Common myeloid progenitor, CD34-positive (primary cell): ENCODE measurements at regions of chr4 and their contacts with region 1.

Region 1: DNA sequence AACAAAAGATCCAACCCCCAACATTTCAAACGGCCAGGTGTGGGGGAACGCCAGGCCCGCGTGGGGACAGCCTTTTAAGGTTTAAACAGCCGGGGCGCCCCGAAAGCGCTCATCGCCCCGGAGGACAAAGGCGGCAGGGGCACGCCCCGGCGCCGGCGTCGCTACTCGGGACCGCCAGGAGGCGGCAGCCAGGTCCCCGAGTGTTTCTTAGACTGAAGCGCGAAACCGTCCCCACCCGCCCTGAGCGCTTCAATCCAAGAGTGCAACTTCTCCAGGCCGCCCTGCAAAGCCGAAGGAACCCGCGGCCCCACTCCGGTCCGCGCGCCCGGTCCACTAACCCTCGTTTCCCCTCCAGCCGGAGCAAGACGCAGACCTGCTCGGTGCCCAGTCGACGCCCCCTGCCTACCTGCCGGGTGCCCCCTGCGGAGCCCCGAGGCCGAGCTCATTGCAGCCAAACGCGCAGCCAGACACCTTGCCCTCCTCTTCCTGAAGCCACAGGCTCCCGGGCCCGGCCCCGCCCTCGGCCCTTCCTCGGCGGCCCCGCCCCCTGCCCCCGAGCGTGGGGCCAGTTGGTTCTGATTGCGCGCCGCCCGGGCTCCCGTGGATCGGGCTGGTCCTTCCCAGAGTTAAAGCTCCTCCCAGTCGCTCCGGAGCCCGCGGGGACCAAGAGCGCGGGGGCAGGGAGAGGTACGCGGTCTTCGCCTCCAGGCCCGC is at the start of gene CASP6:
- DNase-seq: peak; percentile 87 to 94 (median 92)
- H3K4me3 ChIP-seq: peak within 1 kb of the TSS; percentile 78 to 97 (median 88)
- H3K27ac ChIP-seq: peak within 1 kb of the TSS; percentile 74 to 92
- H3K4me1 ChIP-seq: peaks cover 6 to 45% (median 32%) of the 10 kb centered on the region in 4 experiments
- H3K27me3 ChIP-seq: no peaks in the 10 kb centered on the region

Region 2: DNA sequence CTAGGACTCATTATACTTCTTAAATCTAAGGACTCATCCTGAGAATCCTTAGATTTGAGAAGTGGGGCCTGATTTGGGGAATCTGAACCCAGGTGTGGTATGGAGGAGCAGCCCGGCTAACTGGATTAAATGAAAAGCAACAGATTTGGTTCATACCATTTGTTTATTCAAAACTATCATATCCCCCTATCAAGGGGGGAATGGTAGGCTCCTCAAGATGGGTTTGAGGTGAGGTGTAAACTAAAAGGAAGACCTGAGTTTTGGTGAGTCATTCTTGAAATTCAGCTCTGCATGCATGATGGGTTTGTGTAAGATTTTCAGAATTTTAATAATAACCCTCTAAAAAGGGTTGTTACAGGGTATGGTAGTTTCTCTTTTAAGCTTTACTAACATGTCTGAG is 53.2 kb before region 1 on chr4:
- CTCF ChIA-PET with region 1: no interaction called
- POLR2A ChIA-PET with region 1: no interaction called
- DNase-seq: peak in 2 of 3 donors; percentile 16 to 21
- H3K4me3 ChIP-seq: no peak overlapping the region
- H3K27ac ChIP-seq: no peak overlapping the region
- H3K4me1 ChIP-seq: no peaks in the 10 kb centered on the region
- H3K27me3 ChIP-seq: no peaks in the 10 kb centered on the region

Region 3: DNA sequence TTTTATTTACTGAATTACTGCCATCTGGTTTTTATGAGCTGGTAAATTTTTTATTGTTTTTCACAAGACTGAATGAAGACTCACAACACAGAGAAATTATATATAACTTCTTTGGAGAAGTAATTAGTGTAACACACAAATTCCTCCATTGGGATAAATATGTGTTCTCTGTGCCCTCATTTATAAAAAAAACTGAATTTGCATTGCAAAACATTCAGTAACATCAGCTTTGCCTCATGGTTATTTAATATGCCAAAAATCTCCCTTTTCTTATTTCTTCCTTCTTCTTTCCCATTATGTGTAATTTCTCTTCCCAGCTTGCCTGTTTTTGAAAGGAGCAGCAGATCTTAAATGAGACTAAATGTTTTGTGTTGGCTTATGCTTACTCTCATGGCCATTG is 18.4 kb before region 1 on chr4:
- CTCF ChIA-PET with region 1: interaction called, 23 read pairs
- POLR2A ChIA-PET with region 1: interaction called, 4 read pairs
- DNase-seq: no peak
- H3K4me3 ChIP-seq: no peak overlapping the region
- H3K27ac ChIP-seq: no peak overlapping the region
- H3K4me1 ChIP-seq: peaks cover 0 to 4% (median 2%) of the 10 kb centered on the region in 4 experiments
- H3K27me3 ChIP-seq: no peaks in the 10 kb centered on the region

Region 4: GRCh38 chr4:109690690-109691410 is 12.3 kb before region 1 on chr4:
- CTCF ChIA-PET with region 1: interaction called, 23 read pairs
- POLR2A ChIA-PET with region 1: interaction called, 4 read pairs
- DNase-seq: peak in 1 of 3 donors; percentile 6
- H3K4me3 ChIP-seq: no peak overlapping the region
- H3K27ac ChIP-seq: peak overlapping the region in 1 of 2 experiments; percentile 20
- H3K4me1 ChIP-seq: peaks cover 0 to 11% (median 0%) of the 10 kb centered on the region in 4 experiments
- H3K27me3 ChIP-seq: no peaks in the 10 kb centered on the region

Region 5: DNA sequence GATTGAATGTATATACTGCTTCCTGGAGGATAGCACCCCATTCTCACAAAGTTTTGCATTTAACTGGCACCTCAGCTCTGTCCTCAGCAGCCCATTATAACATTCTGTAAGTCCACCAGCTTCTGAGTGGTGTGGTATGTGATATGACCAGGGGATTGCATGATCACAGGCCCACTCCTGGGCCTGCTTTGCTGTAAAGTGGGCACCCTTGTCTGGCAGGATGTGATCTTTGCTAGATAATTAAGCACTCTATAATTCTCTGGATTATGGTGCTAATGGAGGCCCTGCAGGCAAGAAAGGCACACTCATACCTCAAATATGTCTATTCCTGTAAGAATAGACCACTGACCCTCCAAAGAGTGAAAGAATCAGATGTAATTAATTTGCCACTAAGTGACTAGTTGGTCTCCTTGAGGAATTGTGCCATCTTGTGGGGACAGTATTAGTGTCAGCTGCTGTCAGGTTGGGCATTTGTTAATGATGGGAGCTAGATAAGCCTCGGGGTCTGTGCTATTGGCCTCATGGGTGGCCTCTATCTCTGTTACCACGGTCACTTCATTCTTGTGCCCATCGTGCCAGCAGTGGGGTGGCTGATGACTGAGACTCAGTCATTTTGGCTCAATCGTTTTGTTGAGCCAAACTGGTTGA is 100.9 kb after region 1 on chr4:
- CTCF ChIA-PET with region 1: interaction called, 14 read pairs
- POLR2A ChIA-PET with region 1: interaction called, 3 read pairs
- DNase-seq: peak; percentile 53 to 69 (median 69)
- H3K4me3 ChIP-seq: no peak overlapping the region
- H3K27ac ChIP-seq: no peak overlapping the region
- H3K4me1 ChIP-seq: peaks cover 0 to 18% (median 5%) of the 10 kb centered on the region in 4 experiments
- H3K27me3 ChIP-seq: no peaks in the 10 kb centered on the region

Region 6: DNA sequence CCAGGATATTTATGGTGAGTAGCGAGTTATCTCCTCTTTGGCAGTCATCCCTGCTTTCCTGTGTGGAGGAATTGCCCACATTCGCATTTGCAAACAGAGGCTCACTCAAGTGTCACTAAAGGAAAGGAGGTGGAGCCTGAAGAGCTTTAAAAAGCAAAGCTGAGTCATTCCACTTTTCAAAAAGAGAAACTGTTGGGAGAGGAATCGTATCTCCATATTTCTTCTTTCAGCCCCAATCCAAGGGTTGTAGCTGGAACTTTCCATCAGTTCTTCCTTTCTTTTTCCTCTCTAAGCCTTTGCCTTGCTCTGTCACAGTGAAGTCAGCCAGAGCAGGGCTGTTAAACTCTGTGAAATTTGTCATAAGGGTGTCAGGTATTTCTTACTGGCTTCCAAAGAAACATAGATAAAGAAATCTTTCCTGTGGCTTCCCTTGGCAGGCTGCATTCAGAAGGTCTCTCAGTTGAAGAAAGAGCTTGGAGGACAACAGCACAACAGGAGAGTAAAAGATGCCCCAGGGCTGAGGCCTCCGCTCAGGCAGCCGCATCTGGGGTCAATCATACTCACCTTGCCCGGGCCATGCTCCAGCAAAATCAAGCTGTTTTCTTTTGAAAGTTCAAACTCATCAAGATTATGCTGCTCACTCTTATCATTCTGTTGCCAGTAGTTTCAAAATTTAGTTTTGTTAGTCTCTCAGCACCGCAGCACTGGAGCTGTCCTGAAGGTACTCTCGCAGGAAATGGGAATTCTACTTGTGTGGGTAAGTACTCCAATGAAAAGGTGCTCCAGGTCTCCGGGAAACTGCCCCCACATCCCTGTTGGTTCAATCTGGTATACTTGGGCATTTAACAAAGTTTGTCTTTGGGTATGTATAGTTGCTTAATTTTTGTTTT is 209.8 kb after region 1 on chr4 and contains the start of gene EGF:
- CTCF ChIA-PET with region 1: no interaction called
- POLR2A ChIA-PET with region 1: no interaction called
- DNase-seq: peak in 2 of 3 donors; percentile 47 to 59
- H3K4me3 ChIP-seq: peak within 1 kb of the TSS in 6 of 7 experiments; percentile 8 to 69 (median 46)
- H3K27ac ChIP-seq: peak within 1 kb of the TSS in 1 of 2 experiments; percentile 43
- H3K4me1 ChIP-seq: peaks cover 7 to 17% (median 16%) of the 10 kb centered on the region in 4 experiments
- H3K27me3 ChIP-seq: no peaks in the 10 kb centered on the region

Region 7: GRCh38 chr4:109977854-109978501 is 274.9 kb after region 1 on chr4:
- CTCF ChIA-PET with region 1: interaction called, 12 read pairs
- POLR2A ChIA-PET with region 1: no interaction called
- DNase-seq: peak; percentile 40 to 63 (median 57)
- H3K4me3 ChIP-seq: no peak overlapping the region
- H3K27ac ChIP-seq: no peak overlapping the region
- H3K4me1 ChIP-seq: peaks cover 0 to 17% (median 6%) of the 10 kb centered on the region in 4 experiments
- H3K27me3 ChIP-seq: no peaks in the 10 kb centered on the region